ENCODE measurements at regions of chr17 and their contacts with region 1.

Region 1: GRCh38 chr17:781805-782731 is at the starts of genes GLOD4 and MRM3:
- DNase-seq: peak; percentile 88
- H3K4me3 ChIP-seq: peak within 1 kb of the TSS; percentile 99
- H3K27ac ChIP-seq: peak within 1 kb of the TSS; percentile 46
- H3K27me3 ChIP-seq: no peaks in the 10 kb centered on the region
- CTCF ChIP-seq: peak; percentile 6

Region 2: GRCh38 chr17:996554-997344 is 214.7 kb after region 1 on chr17 and contains the start of gene TIMM22:
- in situ Hi-C with region 1: loop called (anchors 25 kb)
- DNase-seq: peak; percentile 92
- H3K4me3 ChIP-seq: peak within 1 kb of the TSS; percentile 100
- H3K27ac ChIP-seq: peak within 1 kb of the TSS; percentile 98
- H3K27me3 ChIP-seq: no peaks in the 10 kb centered on the region
- CTCF ChIP-seq: peak; percentile 76